ENCODE measurements at regions of chr4 and their contacts with region 1.

Region 1: DNA sequence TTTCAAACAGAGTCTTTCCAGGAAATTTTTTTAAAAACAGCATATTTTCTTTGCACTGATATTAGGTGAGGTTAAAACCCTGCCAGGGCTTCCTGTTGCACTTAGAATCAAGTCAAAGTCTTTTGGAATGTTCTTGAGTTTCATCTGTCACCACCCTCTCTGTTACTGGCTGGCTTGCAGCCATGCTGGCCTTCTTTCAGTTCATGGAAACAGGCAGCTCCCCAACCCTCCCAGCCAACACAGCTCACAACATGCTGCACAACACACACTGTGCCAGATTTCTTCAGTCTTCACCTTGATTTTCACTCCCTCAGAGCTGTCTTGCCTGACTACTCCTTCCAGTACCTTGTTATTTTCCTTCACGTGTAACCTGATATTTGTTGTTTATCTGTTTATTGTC is 129.5 kb downstream of the KCNIP4 start:
- DNase-seq: no peak
- ATAC-seq: no peak
- H3K4me3 ChIP-seq: no peak overlapping the region
- H3K27ac ChIP-seq: no peak overlapping the region
- H3K4me1 ChIP-seq: no peaks in the 10 kb centered on the region
- H3K27me3 ChIP-seq: no peaks in the 10 kb centered on the region
- CTCF ChIP-seq: no peak
- EP300 ChIP-seq: no peak
- POLR2A ChIP-seq: no peak
- RAD21 ChIP-seq: no peak

Region 2: DNA sequence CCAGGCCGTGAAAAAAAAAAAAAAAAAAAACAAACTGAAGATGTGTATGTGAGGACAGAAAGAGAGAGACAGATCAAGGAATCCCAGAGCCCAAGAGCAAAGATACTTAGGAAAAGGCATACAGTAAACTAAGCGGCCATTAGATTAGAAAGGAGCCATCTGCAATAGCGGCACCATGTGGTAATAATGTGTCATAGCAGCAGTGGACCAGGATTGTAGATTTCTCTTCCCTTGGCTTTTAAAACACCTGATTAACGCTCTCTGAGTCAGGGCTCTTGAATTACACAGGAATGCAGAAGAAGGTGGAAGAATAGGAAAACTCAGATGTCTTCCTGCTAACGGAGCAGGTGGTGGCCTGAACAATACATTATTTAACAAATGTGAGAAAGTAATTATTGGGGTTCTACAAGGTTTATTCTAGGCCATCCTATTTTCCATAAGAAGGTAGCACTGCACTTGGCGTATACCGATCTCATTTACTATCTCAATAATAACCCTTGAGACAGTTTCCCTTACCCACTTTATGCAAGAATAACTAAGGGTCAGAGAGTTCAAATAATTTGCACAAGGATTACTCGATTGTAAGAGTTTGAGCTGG is 53.2 kb before region 1 on chr4:
- CTCF ChIA-PET with region 1: no interaction called
- POLR2A ChIA-PET with region 1: no interaction called
- in situ Hi-C with region 1: no loop called
- intact Hi-C with region 1: no loop called
- DNase-seq: peak; percentile 25
- ATAC-seq: peak; percentile 85
- H3K4me3 ChIP-seq: no peak overlapping the region
- H3K27ac ChIP-seq: no peak overlapping the region
- H3K4me1 ChIP-seq: no peaks in the 10 kb centered on the region
- H3K27me3 ChIP-seq: no peaks in the 10 kb centered on the region
- CTCF ChIP-seq: peak; percentile 78
- EP300 ChIP-seq: no peak
- POLR2A ChIP-seq: no peak
- RAD21 ChIP-seq: no peak

Region 3: GRCh38 chr4:21848021-21848420 is 28.9 kb after region 1 on chr4:
- CTCF ChIA-PET with region 1: no interaction called
- POLR2A ChIA-PET with region 1: no interaction called
- in situ Hi-C with region 1: no loop called
- intact Hi-C with region 1: loop called (anchors 1 kb)
- DNase-seq: no peak
- ATAC-seq: no peak
- H3K4me3 ChIP-seq: no peak overlapping the region
- H3K27ac ChIP-seq: no peak overlapping the region
- H3K4me1 ChIP-seq: no peaks in the 10 kb centered on the region
- H3K27me3 ChIP-seq: no peaks in the 10 kb centered on the region
- CTCF ChIP-seq: no peak
- EP300 ChIP-seq: no peak
- POLR2A ChIP-seq: no peak
- RAD21 ChIP-seq: no peak

Measured in HepG2 (cell line).